GM12878 (cell line): ENCODE measurements at regions of chr3 and their contacts with region 1.

Region 1: DNA sequence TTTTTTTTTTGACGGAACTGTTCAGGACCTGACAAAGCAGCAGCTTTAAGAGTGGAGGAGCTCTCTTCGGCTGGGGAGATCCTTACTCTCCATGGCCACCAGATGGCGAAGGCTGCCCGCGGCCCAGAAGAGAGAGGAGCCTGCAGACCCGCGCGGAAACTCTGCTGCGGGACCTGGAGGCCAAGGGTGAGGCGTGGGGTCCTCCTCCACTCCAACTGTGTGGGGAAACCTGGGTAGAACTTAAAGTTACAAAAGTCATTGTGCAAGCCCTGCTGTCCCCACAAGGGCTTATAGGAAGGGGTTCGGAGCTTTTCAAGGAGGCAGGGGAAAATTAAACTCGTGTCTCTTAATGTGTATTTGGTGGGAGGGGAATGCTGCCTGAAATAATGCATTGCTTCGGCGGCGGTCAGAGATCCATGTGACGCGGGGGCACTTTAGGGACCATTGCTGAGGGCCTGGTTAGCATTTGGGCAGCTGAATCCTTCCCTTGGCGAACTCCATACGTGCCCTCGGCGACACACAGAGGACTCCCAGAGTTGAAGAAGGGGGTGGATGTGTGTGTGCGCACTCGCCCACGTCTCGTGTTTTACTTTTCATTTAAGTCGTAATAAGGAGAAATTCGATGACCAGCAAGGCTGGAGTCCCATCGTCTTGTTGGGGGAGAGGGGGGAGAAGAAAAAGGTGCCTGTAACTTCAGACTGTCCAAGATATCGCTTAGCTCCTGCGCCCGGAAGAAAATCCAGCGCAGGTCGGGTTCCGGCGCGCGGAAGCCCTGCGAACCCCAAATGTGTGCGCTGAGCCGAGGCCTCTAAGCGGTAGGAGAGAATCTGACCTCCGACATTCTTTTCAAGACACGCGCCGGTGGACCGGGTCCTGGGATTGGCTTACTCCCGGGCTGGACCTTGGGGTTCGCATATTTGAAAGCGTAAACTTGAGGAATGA is 9.7 kb downstream of the EOMES start:
- DNase-seq: no peak
- ATAC-seq: peak; percentile 86
- H3K4me3 ChIP-seq: peak overlapping the region; percentile 71
- H3K27ac ChIP-seq: no peak overlapping the region
- H3K4me1 ChIP-seq: no peaks in the 10 kb centered on the region
- H3K27me3 ChIP-seq: peaks cover 2 to 24% of the 10 kb centered on the region in 2 experiments
- CTCF ChIP-seq: peak; percentile 69 to 88 (median 84)
- EP300 ChIP-seq: no peak; a peak in 1 of 4 replicates
- POLR2A ChIP-seq: no peak
- RAD21 ChIP-seq: peak; percentile 87

Region 2: GRCh38 chr3:27696906-27697305 is 15.5 kb before region 1 on chr3:
- CTCF ChIA-PET with region 1: interaction called, 12 read pairs
- POLR2A ChIA-PET with region 1: no interaction called
- RAD21 ChIA-PET with region 1: interaction called, 5 read pairs
- SMC1A ChIA-PET with region 1: interaction called, 7 read pairs
- in situ Hi-C with region 1: no loop called
- intact Hi-C with region 1: no loop called
- DNase-seq: no peak
- ATAC-seq: no peak
- H3K4me3 ChIP-seq: no peak overlapping the region
- H3K27ac ChIP-seq: no peak overlapping the region
- H3K4me1 ChIP-seq: no peaks in the 10 kb centered on the region
- H3K27me3 ChIP-seq: no peaks in the 10 kb centered on the region
- CTCF ChIP-seq: no peak
- EP300 ChIP-seq: no peak
- POLR2A ChIP-seq: no peak
- RAD21 ChIP-seq: no peak

Region 3: GRCh38 chr3:28036599-28037575 is 324.5 kb after region 1 on chr3:
- CTCF ChIA-PET with region 1: interaction called, 3 read pairs
- POLR2A ChIA-PET with region 1: interaction called, 6 read pairs
- RAD21 ChIA-PET with region 1: interaction called, 7 read pairs
- SMC1A ChIA-PET with region 1: interaction called, 5 read pairs
- in situ Hi-C with region 1: no loop called
- intact Hi-C with region 1: loop called (anchors 5 kb)
- DNase-seq: no peak
- ATAC-seq: peak; percentile 83
- H3K4me3 ChIP-seq: no peak overlapping the region
- H3K27ac ChIP-seq: no peak overlapping the region
- H3K4me1 ChIP-seq: no peaks in the 10 kb centered on the region
- H3K27me3 ChIP-seq: no peaks in the 10 kb centered on the region
- CTCF ChIP-seq: no peak
- EP300 ChIP-seq: peak in 1 of 2 experiments; percentile 34; a peak in 1 of 4 replicates
- POLR2A ChIP-seq: no peak
- RAD21 ChIP-seq: no peak

Region 4: GRCh38 chr3:28134792-28135375 is 422.5 kb after region 1 on chr3:
- CTCF ChIA-PET with region 1: interaction called, 6 read pairs
- POLR2A ChIA-PET with region 1: interaction called, 7 read pairs
- RAD21 ChIA-PET with region 1: interaction called, 13 read pairs
- SMC1A ChIA-PET with region 1: interaction called, 22 read pairs
- in situ Hi-C with region 1: loop called (anchors 10 kb)
- intact Hi-C with region 1: no loop called
- DNase-seq: no peak
- ATAC-seq: peak; percentile 16
- H3K4me3 ChIP-seq: no peak overlapping the region
- H3K27ac ChIP-seq: no peak overlapping the region
- H3K4me1 ChIP-seq: no peaks in the 10 kb centered on the region
- H3K27me3 ChIP-seq: no peaks in the 10 kb centered on the region
- CTCF ChIP-seq: no peak
- EP300 ChIP-seq: no peak
- POLR2A ChIP-seq: no peak
- RAD21 ChIP-seq: no peak

Region 5: DNA sequence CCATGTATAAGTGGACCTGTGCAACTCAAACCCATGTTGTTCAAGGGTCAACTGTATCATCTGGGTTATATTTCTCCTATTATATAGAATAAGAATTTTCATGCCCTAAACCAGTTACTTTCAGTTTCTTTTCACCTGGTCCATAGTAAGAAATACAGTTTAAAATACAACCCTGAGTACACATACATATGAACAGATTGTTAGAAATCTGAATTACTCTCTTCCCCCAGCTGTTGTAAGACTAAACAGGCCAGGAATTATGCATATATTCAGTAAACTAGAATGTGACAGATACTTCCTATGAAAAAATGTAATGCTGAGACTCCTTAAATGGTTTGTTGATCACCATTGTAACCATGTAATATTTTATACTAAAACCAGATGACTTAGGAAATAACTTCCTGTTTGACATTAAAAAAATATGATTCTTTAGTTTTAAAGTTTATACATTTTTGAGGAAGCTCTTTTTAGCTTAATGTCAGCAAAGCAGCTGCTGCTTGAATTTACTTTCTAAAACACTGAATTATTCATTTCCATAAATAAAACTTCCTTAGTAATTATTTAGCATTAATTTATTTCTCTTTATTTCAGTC is 583.6 kb after region 1 on chr3:
- CTCF ChIA-PET with region 1: interaction called, 9 read pairs
- POLR2A ChIA-PET with region 1: no interaction called
- RAD21 ChIA-PET with region 1: interaction called, 11 read pairs
- SMC1A ChIA-PET with region 1: interaction called, 5 read pairs
- in situ Hi-C with region 1: no loop called
- intact Hi-C with region 1: no loop called
- DNase-seq: no peak
- ATAC-seq: peak; percentile 62
- H3K4me3 ChIP-seq: no peak overlapping the region
- H3K27ac ChIP-seq: no peak overlapping the region; the same call in 1 of the 2 replicates
- H3K4me1 ChIP-seq: no peaks in the 10 kb centered on the region
- H3K27me3 ChIP-seq: no peaks in the 10 kb centered on the region
- CTCF ChIP-seq: no peak
- EP300 ChIP-seq: no peak
- POLR2A ChIP-seq: no peak
- RAD21 ChIP-seq: no peak

Region 6: DNA sequence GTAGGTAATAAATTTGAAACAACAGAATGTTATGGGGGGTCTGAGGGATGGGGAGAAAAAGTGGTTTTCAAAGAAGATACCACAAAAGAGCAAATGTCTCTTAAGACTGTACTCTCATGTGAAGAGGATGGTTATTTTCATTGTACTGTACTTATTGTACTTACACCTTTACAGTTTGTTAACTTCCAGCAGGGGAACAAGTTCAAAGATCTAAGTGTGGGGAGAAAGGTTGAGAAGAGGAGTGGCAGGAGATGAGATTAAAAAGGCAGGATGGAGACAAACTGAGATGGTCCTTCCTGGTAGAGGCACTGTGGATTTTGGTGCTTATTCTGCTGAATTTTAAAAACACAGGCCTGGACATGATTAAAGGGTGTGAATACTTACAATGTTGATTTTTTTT is 630.7 kb after region 1 on chr3:
- CTCF ChIA-PET with region 1: interaction called, 60 read pairs
- POLR2A ChIA-PET with region 1: interaction called, 17 read pairs
- RAD21 ChIA-PET with region 1: interaction called, 26 read pairs
- SMC1A ChIA-PET with region 1: interaction called, 7 read pairs
- in situ Hi-C with region 1: no loop called
- intact Hi-C with region 1: no loop called
- DNase-seq: no peak
- ATAC-seq: peak; percentile 13
- H3K4me3 ChIP-seq: no peak overlapping the region
- H3K27ac ChIP-seq: no peak overlapping the region
- H3K4me1 ChIP-seq: no peaks in the 10 kb centered on the region
- H3K27me3 ChIP-seq: no peaks in the 10 kb centered on the region
- CTCF ChIP-seq: no peak
- EP300 ChIP-seq: no peak
- POLR2A ChIP-seq: no peak
- RAD21 ChIP-seq: no peak